GM12878 (cell line): ENCODE measurements at regions of chr10 and their contacts with region 1.

Region 1: GRCh38 chr10:74977913-74978847 is 133.3 kb upstream of the SAMD8 start:
- DNase-seq: peak; percentile 86
- ATAC-seq: peak; percentile 92
- H3K4me3 ChIP-seq: peak overlapping the region; percentile 41
- H3K27ac ChIP-seq: peak overlapping the region; percentile 81
- H3K4me1 ChIP-seq: peaks cover 42% of the 10 kb centered on the region
- H3K27me3 ChIP-seq: no peaks in the 10 kb centered on the region
- CTCF ChIP-seq: no peak
- EP300 ChIP-seq: peak; percentile 98 to 99
- POLR2A ChIP-seq: no peak
- RAD21 ChIP-seq: peak; percentile 20; the same call in 1 of the 2 replicates

Region 2: GRCh38 chr10:74831518-74832120 is 146.6 kb before region 1 on chr10:
- CTCF ChIA-PET with region 1: interaction called, 8 read pairs
- POLR2A ChIA-PET with region 1: interaction called, 3 read pairs
- RAD21 ChIA-PET with region 1: interaction called, 23 read pairs
- SMC1A ChIA-PET with region 1: interaction called, 11 read pairs
- in situ Hi-C with region 1: no loop called
- intact Hi-C with region 1: no loop called
- DNase-seq: no peak
- ATAC-seq: no peak
- H3K4me3 ChIP-seq: peak overlapping the region; percentile 41; the same call in 1 of the 2 replicates
- H3K27ac ChIP-seq: peak overlapping the region; percentile 58
- H3K4me1 ChIP-seq: peaks cover 21% of the 10 kb centered on the region
- H3K27me3 ChIP-seq: no peaks in the 10 kb centered on the region
- CTCF ChIP-seq: no peak
- EP300 ChIP-seq: no peak
- POLR2A ChIP-seq: no peak
- RAD21 ChIP-seq: no peak

Region 3: DNA sequence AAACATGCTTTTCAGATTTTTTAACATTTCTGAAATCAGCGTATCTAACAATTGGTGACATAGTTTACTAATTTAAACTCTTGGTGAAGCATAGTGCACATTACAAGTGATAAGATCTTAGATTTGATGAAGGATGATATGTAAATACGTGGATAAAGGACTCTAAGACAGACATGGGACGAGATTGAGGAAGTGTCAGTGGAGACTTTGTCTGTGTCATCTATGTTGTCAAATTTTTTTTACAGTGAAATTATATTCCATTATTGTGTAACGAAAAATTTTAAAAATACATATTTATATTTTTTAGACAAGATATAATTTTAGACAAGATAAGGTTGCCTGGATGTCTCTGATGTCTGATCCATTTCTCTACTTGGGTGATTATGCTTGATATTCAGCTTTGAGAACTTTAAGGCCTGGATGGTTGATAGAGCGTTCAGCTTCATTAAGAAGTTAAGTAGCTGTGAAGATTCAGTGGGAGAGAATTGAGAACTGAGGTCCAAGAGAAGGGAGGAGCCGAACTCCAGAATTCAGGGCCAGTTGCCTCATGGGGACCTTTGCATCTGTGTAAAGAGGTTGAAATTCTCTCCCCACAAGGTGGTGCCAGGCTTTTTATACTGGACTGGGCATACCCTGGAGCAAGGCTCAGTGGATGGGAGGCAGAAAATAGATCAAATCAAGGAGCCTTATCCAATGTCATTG is 89.1 kb before region 1 on chr10:
- CTCF ChIA-PET with region 1: interaction called, 3 read pairs
- POLR2A ChIA-PET with region 1: no interaction called
- RAD21 ChIA-PET with region 1: interaction called, 5 read pairs
- SMC1A ChIA-PET with region 1: interaction called, 20 read pairs
- in situ Hi-C with region 1: no loop called
- intact Hi-C with region 1: no loop called
- DNase-seq: no peak
- ATAC-seq: peak; percentile 77
- H3K4me3 ChIP-seq: no peak overlapping the region
- H3K27ac ChIP-seq: no peak overlapping the region
- H3K4me1 ChIP-seq: no peaks in the 10 kb centered on the region
- H3K27me3 ChIP-seq: no peaks in the 10 kb centered on the region
- CTCF ChIP-seq: peak in 2 of 3 experiments; percentile 26 to 39; a peak in 3 of 6 replicates
- EP300 ChIP-seq: no peak
- POLR2A ChIP-seq: no peak
- RAD21 ChIP-seq: peak; percentile 50

Region 4: DNA sequence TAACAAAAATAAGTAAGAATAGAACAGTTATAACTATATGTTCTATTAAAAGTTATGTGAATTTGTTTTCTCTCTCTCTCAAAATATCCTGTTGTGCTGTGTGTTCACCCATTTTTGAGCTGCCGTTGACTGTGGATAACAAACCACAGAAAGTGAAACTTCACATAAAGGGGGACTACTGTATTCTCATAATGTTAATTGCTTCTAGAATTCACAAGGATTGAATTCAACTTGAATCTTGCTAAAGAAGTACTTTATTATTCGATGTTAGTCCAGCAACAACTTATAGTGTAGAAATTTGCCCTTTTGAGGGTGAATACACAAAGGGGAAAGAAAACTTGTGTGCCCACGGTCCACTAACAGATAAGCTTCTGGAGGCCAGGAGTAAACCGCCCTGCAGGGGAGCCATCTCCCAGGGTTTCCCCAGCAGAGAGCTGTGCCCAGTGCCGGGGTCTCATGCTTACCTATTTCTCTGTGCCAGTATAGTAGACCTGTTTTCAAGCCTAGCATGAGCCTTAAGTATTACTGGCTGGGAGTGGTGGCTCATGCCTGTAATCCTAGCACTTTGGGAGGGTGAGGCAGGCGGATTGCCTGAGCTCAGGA is 64.7 kb before region 1 on chr10:
- CTCF ChIA-PET with region 1: interaction called, 7 read pairs
- POLR2A ChIA-PET with region 1: no interaction called
- RAD21 ChIA-PET with region 1: interaction called, 9 read pairs
- SMC1A ChIA-PET with region 1: interaction called, 11 read pairs
- in situ Hi-C with region 1: no loop called
- intact Hi-C with region 1: no loop called
- DNase-seq: no peak
- ATAC-seq: peak; percentile 89
- H3K4me3 ChIP-seq: peak overlapping the region; percentile 15; the same call in 1 of the 2 replicates
- H3K27ac ChIP-seq: peak overlapping the region; percentile 62
- H3K4me1 ChIP-seq: peaks cover 5% of the 10 kb centered on the region
- H3K27me3 ChIP-seq: no peaks in the 10 kb centered on the region
- CTCF ChIP-seq: no peak
- EP300 ChIP-seq: no peak
- POLR2A ChIP-seq: no peak
- RAD21 ChIP-seq: 0 out of 2 replicates have a peak, but pooled peaks have one; percentile 1

Region 5: GRCh38 chr10:74991440-74992130 is 13.4 kb after region 1 on chr10:
- CTCF ChIA-PET with region 1: interaction called, 9 read pairs
- POLR2A ChIA-PET with region 1: interaction called, 10 read pairs
- RAD21 ChIA-PET with region 1: interaction called, 19 read pairs
- SMC1A ChIA-PET with region 1: interaction called, 553 read pairs
- in situ Hi-C with region 1: no loop called
- intact Hi-C with region 1: no loop called
- DNase-seq: no peak
- ATAC-seq: peak; percentile 92
- H3K4me3 ChIP-seq: no peak overlapping the region
- H3K27ac ChIP-seq: no peak overlapping the region
- H3K4me1 ChIP-seq: peaks cover 7% of the 10 kb centered on the region
- H3K27me3 ChIP-seq: no peaks in the 10 kb centered on the region
- CTCF ChIP-seq: peak; percentile 34 to 54 (median 45)
- EP300 ChIP-seq: no peak
- POLR2A ChIP-seq: no peak
- RAD21 ChIP-seq: peak; percentile 51

Region 6: DNA sequence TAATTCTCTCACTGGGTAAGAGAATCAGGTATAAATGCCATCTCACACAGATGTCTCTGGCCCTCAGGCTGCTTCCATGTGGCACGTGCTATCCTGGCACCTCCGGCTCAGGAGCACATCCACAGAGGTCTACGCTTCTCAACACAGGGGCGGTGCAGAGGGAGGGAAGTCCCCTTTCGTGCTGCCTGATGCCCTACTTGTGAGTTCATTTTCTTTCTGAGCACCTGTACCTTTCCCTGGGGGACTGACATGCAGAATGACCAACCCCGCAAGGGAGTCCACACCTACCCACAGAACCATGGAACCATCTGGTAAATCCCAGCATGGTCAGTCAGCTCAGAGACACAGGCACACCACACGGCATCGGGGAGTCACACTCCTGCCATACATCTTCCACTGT is 34.3 kb after region 1 on chr10:
- CTCF ChIA-PET with region 1: interaction called, 36 read pairs
- POLR2A ChIA-PET with region 1: interaction called, 8 read pairs
- RAD21 ChIA-PET with region 1: interaction called, 13 read pairs
- SMC1A ChIA-PET with region 1: interaction called, 553 read pairs
- in situ Hi-C with region 1: no loop called
- intact Hi-C with region 1: loop called (anchors 1 kb)
- DNase-seq: no peak
- ATAC-seq: peak; percentile 61
- H3K4me3 ChIP-seq: no peak overlapping the region
- H3K27ac ChIP-seq: peak overlapping the region; percentile 67
- H3K4me1 ChIP-seq: peaks cover 41% of the 10 kb centered on the region
- H3K27me3 ChIP-seq: no peaks in the 10 kb centered on the region
- CTCF ChIP-seq: no peak
- EP300 ChIP-seq: peak; percentile 14 to 29; a peak in 1 of 4 replicates
- POLR2A ChIP-seq: no peak
- RAD21 ChIP-seq: no peak

Region 7: DNA sequence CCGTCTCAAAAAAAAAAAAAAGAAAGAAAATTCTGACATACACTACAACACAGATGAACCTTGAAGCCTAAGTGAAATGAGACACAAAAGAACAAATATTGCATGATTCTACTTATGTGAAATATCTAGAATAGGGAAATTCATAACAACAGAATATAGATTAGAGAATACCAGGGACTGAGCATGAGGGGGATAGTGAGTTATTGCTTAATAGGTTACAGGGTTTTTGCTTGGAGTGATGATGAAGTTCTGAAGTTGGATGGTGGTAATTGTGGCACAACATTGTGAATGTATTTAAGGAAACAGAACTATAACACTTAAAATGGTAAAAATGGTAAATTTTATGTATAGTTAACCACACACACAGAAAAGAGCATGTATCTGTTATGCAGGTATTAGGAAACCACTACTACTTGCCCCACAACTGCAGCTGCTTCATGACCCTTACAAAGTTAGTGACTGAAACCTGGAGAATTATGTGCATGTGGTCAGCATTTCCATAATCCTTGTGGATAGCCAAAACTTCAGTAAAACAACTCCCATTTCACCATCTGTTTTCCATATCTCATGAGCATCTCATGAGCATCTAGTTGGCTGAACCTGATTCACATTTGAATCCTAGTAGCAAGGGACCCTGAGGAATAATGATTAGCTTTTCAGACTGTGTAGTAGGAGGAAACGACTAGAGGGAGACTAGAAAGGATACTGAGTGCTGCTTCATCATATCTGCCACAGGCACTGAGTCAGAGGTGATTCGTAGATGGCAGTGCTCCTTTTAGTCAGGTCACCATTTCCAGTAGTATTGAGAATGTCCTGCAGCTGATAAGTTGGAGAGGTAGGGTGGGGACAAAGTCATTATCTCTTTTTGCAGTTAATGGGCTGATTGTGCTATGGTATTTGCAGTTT is 159.6 kb after region 1 on chr10:
- CTCF ChIA-PET with region 1: no interaction called
- POLR2A ChIA-PET with region 1: no interaction called
- RAD21 ChIA-PET with region 1: no interaction called
- SMC1A ChIA-PET with region 1: no interaction called
- in situ Hi-C with region 1: no loop called
- intact Hi-C with region 1: no loop called
- DNase-seq: no peak
- ATAC-seq: peak; percentile 69
- H3K4me3 ChIP-seq: no peak overlapping the region
- H3K27ac ChIP-seq: no peak overlapping the region
- H3K4me1 ChIP-seq: peaks cover 12% of the 10 kb centered on the region
- H3K27me3 ChIP-seq: no peaks in the 10 kb centered on the region
- CTCF ChIP-seq: no peak
- EP300 ChIP-seq: no peak
- POLR2A ChIP-seq: no peak
- RAD21 ChIP-seq: no peak